PC-9 (cell line): ENCODE measurements at regions of chr13 and their contacts with region 1.

Region 1: GRCh38 chr13:88196106-88196505 is 524.9 kb downstream of the SLITRK5 start:
- DNase-seq: no peak
- H3K4me3 ChIP-seq: no peak overlapping the region
- H3K27ac ChIP-seq: no peak overlapping the region
- H3K4me1 ChIP-seq: no peaks in the 10 kb centered on the region
- H3K27me3 ChIP-seq: no peaks in the 10 kb centered on the region
- CTCF ChIP-seq: no peak

Region 2: DNA sequence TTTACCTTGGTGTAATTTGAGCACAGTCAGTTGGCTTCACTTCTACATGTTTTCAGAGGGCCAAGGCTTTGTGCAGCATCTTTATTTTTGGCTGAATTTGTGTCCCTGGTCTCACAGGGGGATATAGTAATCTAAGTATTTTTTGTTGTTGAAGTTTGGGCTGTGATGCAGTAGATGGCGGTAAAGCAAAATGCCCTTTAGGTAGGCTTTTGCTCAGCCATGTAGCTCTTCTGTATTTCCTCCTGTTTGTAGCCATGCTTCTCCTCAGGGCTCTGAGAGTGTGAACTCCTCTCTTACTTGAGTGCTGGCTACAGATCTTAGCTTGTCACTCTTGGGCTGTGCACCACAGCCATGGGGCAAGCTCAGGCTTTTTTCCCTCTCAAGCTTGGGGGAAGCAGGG is 196.3 kb before region 1 on chr13:
- CTCF ChIA-PET with region 1: no interaction called
- POLR2A ChIA-PET with region 1: no interaction called
- intact Hi-C with region 1: loop called (anchors 5 kb)
- DNase-seq: no peak
- H3K4me3 ChIP-seq: no peak overlapping the region
- H3K27ac ChIP-seq: no peak overlapping the region
- H3K4me1 ChIP-seq: 0 out of 2 replicates have a peak, but pooled peaks cover 8% of the 10 kb centered on the region
- H3K27me3 ChIP-seq: no peaks in the 10 kb centered on the region
- CTCF ChIP-seq: no peak

Region 3: DNA sequence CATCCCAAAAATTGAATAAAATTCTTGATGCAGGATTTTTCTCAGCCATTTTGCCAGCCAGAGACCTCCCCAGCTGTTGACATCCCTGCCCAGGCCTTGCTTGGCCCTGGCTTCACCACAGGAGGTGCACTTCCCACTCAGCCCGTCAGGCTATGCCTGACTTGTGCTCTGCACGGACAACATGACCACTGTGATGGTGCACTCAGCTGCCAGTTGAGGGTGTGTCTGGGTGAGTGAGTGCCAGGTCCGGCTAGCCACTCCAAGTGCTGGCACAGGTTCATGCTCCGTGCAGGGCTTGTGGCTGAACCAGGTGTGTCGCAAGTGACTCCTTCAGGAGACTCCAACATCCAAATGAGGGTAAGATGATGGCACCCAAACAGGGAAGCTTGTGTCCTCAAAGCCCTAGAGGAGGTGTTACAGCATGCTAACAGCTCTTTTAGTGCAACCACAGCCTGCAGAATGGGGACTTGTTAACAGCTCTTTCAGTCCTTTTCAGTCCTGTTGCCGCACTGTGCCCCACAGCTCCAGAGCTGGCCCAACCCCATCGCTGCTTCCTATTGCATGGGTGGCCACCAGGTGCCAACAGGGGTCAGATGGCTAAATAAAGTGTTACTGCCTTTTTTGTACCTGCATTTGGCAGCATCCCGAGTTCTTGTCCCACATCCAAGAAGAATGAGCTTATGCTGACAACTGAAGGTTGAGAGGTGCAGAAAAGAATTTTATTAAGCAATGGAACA is 144.2 kb before region 1 on chr13:
- CTCF ChIA-PET with region 1: no interaction called
- POLR2A ChIA-PET with region 1: no interaction called
- intact Hi-C with region 1: no loop called
- DNase-seq: no peak
- H3K4me3 ChIP-seq: no peak overlapping the region
- H3K27ac ChIP-seq: no peak overlapping the region
- H3K4me1 ChIP-seq: no peaks in the 10 kb centered on the region
- H3K27me3 ChIP-seq: no peaks in the 10 kb centered on the region
- CTCF ChIP-seq: no peak